Left cardiac atrium (tissue), 4 donors: ENCODE measurements at regions of chr9 and their contacts with region 1.

Region 1: DNA sequence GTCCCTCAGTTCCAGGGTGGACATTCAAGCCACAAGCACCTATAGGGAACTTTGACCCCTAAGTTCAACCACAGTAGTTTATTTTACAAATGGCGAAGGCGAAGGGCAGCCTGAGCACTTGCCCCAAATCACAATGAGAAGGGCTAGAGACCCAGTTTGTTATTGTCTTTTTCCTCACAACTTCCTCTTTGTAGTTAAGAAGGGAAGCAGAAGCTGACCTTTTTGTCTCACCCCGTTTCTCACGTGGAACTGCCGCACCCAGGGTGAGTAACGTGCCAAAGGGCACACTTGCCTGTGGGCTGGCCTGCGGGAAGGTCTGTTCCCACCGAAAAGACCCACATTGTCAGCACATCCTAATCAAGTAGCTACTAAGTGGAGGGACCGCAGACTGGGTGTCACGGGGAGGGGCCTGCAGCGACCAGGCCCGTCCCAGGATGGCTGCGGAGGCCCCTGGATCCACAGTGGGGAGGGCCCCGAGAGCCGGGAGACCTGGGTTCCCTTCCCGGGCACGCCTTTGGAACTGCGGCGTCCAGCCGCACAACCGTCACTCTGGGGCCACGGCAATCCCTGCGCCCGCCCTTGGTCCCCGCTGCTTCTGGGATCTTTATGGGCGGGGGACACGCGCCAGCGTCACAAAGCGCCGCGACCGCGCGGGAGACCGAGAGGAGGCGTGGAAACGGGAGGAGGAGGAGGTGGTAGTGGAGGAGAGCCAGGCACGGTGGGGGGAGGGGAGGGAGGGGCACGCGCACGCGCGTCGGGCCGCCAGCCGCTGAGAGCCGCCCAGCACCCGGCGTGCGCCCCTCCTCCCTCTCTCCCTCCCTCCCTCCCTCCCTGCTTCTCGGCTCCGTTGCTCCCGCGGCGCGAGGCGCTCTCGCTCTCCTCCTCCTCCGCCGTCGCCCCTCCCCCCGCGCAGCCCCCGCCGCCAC is at the start of gene UBE2R2:
- DNase-seq: peak; percentile 93
- ATAC-seq: peak; percentile 90 to 91
- total RNA-seq, gene UBE2R2: 30.5 to 33.5 TPM

Region 2: DNA sequence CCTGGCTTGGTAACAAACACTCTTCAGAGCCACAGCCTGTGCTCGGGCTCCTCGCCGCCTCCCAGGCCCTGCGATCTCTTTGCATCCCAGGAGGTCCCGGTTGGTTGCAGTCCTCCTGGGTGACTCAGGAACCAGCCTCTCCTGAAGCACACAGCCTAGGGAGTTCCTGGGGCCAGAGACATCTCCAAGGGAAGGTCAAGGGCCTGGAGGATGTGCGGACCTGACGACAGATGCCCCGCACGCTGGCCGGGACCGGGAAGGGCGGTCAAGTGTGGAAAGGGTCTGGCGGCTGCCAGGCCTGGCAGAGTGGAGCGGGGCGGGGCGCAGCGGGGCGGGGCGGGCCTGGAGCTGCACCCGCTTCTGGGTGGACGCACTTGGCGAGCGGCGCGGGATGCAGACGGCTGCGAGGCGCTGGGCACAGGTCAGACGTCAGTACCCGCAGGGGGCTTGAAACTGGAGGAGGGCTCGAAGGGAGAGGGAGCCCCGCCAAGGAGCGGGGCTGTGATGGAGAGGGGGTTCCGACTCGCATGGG is 66.2 kb before region 1 on chr9:
- intact Hi-C with region 1: no loop called
- DNase-seq: peak; percentile 21
- ATAC-seq: peak in 1 of 2 donors; percentile 89

Region 3: GRCh38 chr9:33852216-33852826 is 35.7 kb after region 1 on chr9:
- intact Hi-C with region 1: loop called (anchors 2 to 5 kb)
- DNase-seq: peak; percentile 73
- ATAC-seq: peak; percentile 76 to 87

Region 4: DNA sequence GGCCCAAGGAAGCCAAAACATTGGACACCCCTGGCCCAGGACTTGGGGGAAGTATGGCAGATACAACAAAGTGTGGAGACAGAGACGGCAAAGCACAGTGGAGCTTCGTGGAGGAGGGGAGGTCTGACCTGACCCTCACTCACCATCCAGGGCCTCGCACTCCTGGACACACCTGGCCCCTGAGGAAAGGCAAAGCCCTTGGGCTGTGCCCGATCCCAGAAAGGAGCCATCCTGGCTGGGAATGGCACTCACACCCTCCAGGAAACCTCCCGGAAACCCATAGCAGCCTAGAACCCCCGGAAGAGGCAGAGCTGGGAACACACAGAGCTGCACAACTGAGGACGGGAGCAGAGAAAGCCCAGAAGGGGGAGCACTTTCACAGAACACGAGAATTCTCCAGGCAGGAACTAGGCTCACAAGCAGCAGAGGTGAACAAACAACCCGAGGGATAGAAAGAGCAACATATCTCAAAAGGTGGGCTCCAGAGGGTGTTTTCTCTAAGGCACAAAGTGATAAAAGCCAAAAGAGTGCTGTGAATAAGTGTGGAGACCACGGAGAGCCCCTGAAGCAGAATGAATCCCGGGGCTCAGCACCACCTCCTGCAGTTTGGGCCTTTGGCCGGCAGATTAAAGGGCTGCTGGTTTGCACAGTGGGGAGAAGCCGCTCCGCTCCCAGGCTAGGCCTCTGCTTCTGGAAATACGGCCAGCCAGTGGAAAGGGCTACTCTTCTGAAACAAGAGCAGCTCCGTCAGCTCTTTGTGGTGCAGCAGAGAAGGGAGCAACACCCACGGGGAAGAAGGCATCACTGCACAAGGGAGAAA is 108.6 kb after region 1 on chr9:
- intact Hi-C with region 1: loop called in 1 of 2 experiments (anchors 5 kb)
- DNase-seq: no peak
- ATAC-seq: peak; percentile 51 to 57